Activated T-helper 2 cell treated with anti-CD3 and anti-CD28 coated beads, Interferon-gamma antibody, Interleukin-2, Interleukin-4, amounts not matched to agents 10 μg/mL and 5 μg/mL and 100 μg/mL, durations not matched to agents 14 hours and 24 hours and 36 hours (primary cell): ENCODE measurements at regions of chr3 and their contacts with region 1.

Region 1: GRCh38 chr3:112464264-112464663 is 35.0 kb downstream of the BTLA start:
- DNase-seq: no peak
- H3K4me3 Mint-ChIP-seq: peak overlapping the region; percentile 38
- H3K27ac Mint-ChIP-seq: no peak overlapping the region
- H3K4me1 Mint-ChIP-seq: peaks cover 65% of the 10 kb centered on the region
- H3K27me3 Mint-ChIP-seq: no peaks in the 10 kb centered on the region

Region 2: GRCh38 chr3:112379020-112379690 is 85.1 kb before region 1 on chr3:
- intact Hi-C with region 1: loop called (anchors 1 kb)
- DNase-seq: no peak
- H3K4me3 Mint-ChIP-seq: no peak overlapping the region
- H3K27ac Mint-ChIP-seq: peak overlapping the region; percentile 83
- H3K4me1 Mint-ChIP-seq: peaks cover 77% of the 10 kb centered on the region
- H3K27me3 Mint-ChIP-seq: no peaks in the 10 kb centered on the region

Region 3: GRCh38 chr3:112407214-112407887 is 56.9 kb before region 1 on chr3:
- intact Hi-C with region 1: loop called (anchors 1 kb)
- DNase-seq: no peak
- H3K4me3 Mint-ChIP-seq: no peak overlapping the region
- H3K27ac Mint-ChIP-seq: peak overlapping the region; percentile 68
- H3K4me1 Mint-ChIP-seq: peaks cover 29% of the 10 kb centered on the region
- H3K27me3 Mint-ChIP-seq: peaks cover 6% of the 10 kb centered on the region

Region 4: GRCh38 chr3:112437146-112438022 is 26.9 kb before region 1 on chr3:
- intact Hi-C with region 1: loop called (anchors 1 kb)
- DNase-seq: no peak
- H3K4me3 Mint-ChIP-seq: no peak overlapping the region
- H3K27ac Mint-ChIP-seq: no peak overlapping the region
- H3K4me1 Mint-ChIP-seq: peaks cover 54% of the 10 kb centered on the region
- H3K27me3 Mint-ChIP-seq: no peaks in the 10 kb centered on the region

Region 5: DNA sequence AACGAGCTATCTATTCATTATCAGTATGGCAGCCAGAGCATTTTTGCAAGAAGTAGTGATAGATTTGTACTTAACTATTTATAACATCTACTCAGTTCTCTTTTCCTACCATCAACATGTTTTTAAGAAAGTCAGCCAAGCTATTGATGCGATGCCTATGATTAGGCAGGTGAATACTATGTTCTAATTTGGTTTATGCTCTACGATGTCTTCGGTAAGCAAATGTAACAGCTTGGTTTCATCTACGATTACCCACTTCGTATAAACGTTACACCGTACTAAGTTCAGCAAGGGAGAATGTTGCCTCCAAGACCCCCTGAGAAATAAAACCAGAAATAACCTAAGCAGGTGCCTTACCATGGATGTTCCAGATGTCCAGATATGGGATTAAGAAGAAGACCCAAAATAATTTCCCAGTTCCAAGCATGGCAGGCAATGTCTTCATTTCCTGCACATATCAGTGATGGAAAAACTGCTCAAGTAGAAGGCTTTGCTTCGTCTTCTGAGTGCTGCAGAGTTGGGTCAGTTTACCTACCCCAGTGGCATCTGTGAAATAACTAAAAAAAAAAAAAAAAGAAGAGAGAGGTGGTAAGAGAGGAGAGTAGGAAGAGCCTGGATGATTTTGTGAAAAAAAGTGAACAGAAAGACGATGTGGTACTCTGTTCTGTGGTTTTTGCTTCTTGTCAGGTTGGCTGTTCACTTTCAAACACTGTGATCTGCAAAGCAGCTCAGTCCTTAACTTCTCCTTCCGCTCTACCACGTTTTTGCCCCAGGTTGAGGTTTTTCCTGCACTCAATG is 34.8 kb after region 1 on chr3 and contains the start of gene BTLA:
- intact Hi-C with region 1: loop called (anchors 1 kb)
- DNase-seq: no peak
- H3K4me3 Mint-ChIP-seq: peak within 1 kb of the TSS; percentile 98
- H3K27ac Mint-ChIP-seq: peak within 1 kb of the TSS; percentile 94
- H3K4me1 Mint-ChIP-seq: peaks cover 60% of the 10 kb centered on the region
- H3K27me3 Mint-ChIP-seq: no peaks in the 10 kb centered on the region
- total RNA-seq, gene BTLA: 31.1 and 35.7 TPM in 2 replicates

Region 6: DNA sequence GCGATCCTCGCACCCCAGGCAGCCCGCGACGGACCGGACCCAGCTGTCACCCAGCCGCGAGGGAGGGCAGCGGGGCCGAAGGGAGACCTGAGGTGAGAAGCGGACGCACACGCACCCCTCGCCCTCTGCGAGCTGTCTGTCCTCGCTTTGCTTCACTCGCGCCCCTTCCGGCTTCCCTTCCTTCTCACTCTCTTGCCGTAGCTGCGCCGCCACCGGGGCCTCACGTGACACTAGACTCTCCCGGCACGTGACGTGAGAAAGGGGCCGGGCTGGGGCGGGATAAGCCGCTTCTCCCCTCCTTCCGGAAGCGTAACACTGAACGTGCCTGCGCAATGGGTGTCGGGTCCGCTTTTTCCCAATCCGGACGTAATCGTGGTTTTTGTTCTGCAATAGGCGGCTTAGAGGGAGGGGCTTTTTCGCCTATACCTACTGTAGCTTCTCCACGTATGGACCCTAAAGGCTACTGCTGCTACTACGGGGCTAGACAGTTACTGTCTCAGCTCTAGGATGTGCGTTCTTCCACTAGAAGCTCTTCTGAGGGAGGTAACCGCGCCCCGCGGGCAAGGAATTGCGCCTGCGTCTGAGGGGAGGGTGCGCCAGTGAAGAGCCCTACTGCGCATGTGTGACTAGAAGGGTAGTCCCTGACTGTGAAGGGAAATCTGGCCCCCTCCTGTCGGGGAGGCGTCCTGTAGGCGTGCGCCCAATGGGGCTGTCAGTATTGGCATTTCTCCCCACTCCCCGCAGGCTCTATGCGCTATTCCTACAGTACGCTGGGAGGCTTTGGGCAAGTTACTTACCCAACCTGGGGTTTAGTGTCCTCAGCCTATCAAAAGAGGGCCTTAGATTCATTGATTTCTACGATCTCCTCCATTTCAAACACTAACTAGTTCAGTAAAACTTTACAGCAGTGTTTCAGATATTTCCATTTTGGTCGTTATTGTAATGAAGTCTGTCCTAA is 97.7 kb after region 1 on chr3 and contains the starts of genes ATG3 and SLC35A5:
- intact Hi-C with region 1: loop called (anchors 2 kb)
- DNase-seq: peak; percentile 98
- H3K4me3 Mint-ChIP-seq: peak within 1 kb of the TSS; percentile 92
- H3K27ac Mint-ChIP-seq: peak within 1 kb of the TSS; percentile 99
- H3K4me1 Mint-ChIP-seq: peaks cover 49% of the 10 kb centered on the region
- H3K27me3 Mint-ChIP-seq: no peaks in the 10 kb centered on the region
- total RNA-seq, gene ATG3: 61.1 and 61.6 TPM in 2 replicates
- total RNA-seq, gene SLC35A5: 12.6 and 17.8 TPM in 2 replicates